ENCODE measurements at regions of chr11 and their contacts with region 1.

Region 1: DNA sequence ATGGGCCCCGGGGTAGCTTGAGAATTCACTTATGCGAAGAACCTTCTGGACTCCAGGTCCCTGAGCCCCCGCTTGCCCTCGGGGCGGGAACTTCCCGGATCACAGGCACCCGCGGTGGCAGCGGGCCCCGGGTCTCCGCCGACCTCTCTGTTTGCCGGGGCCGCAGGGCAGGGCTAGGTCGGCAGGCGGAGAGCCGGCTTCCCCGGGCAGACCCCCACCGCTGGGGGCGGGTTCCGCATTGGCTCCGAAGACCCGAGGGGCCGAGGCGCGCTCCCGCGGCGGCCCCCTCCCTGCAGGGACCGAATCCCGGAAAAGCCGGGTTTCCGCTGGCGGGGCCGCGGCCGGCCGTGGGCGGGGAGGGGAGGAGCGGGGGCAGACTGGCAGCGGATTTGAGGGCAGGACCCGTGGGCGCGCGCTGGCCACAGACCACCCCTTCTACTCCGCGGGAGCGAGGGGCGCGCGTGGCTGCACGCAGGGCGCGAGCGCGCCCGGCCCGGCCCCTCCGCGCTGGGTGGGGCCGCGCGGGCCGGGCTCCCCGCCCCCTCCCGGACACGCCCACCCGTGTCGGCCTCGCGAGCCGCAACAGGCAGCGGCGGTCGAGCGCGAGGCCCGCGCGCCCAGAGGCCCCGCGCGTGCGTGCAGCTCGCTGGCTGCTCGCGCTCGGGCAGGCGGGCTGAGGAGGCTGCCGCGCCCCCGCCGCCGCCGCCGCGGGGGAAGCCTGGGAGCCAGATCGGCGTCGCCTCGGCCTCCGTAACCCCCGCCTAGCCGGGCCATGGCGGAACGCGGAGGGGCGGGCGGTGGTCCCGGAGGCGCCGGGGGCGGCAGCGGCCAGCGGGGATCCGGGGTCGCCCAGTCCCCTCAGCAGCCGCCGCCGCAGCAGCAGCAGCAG is at the start of gene PACS1:
- DNase-seq: peak; percentile 78
- H3K4me3 Mint-ChIP-seq: peak within 1 kb of the TSS; percentile 95
- H3K27ac Mint-ChIP-seq: peak within 1 kb of the TSS; percentile 91
- H3K4me1 Mint-ChIP-seq: peaks cover 70% of the 10 kb centered on the region
- H3K27me3 Mint-ChIP-seq: no peaks in the 10 kb centered on the region
- total RNA-seq, gene PACS1: 80.4 and 89.5 TPM in 2 replicates

Region 2: DNA sequence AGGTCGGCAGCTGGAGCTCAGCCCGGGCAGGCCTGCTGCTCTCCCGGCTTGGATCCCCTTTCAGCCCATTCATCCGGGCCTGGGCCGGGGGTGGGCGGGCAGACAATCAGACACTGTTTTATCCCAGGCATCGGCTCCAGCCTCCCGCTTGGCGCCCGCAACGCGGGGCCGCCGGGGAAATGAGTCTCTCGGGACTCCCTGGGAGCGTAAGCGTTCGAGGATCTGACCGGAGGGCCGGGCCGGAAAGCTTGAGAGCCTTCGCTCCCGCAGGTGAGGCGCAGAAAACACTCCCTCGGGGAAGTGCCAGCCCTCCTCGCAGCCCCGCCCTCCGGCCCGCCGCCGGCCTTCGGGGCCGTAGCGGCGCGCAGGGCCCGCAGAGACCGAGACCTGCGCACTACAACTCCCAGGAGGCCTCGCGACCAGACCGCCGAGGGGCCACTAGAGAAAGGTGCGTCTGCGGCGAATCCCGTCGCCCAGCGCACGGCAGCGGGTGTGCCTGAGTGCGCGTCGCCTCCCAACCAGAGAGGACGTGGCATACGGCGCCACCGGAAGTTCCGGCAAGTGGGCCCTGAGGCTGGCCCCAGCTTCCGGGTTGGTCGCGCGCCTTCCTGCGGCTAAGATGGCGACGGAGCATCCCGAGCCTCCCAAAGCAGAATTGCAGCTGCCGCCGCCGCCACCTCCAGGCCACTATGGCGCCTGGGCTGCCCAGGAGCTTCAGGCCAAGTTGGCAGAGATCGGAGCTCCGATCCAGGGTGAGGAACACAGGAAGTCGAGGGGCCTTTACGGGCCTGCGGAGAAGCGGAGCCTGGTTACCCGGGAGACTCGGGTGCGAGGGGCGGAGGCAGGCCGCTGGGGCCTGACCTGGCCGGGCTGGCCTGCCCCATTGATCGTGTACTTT is 17.9 kb before region 1 on chr11 and contains the start of gene SF3B2:
- intact Hi-C with region 1: loop called (anchors 1 kb)
- DNase-seq: peak; percentile 97
- H3K4me3 Mint-ChIP-seq: peak within 1 kb of the TSS; percentile 100
- H3K27ac Mint-ChIP-seq: peak within 1 kb of the TSS; percentile 97
- H3K4me1 Mint-ChIP-seq: peaks cover 33% of the 10 kb centered on the region
- H3K27me3 Mint-ChIP-seq: peaks cover 4% of the 10 kb centered on the region
- total RNA-seq, gene SF3B2: 267 TPM in 2 replicates

Region 3: GRCh38 chr11:66081505-66081904 is 11.5 kb after region 1 on chr11:
- intact Hi-C with region 1: loop called (anchors 1 kb)
- DNase-seq: peak; percentile 70
- H3K4me3 Mint-ChIP-seq: peak overlapping the region; percentile 89
- H3K27ac Mint-ChIP-seq: peak overlapping the region; percentile 93
- H3K4me1 Mint-ChIP-seq: peaks cover 64% of the 10 kb centered on the region
- H3K27me3 Mint-ChIP-seq: no peaks in the 10 kb centered on the region

Region 4: DNA sequence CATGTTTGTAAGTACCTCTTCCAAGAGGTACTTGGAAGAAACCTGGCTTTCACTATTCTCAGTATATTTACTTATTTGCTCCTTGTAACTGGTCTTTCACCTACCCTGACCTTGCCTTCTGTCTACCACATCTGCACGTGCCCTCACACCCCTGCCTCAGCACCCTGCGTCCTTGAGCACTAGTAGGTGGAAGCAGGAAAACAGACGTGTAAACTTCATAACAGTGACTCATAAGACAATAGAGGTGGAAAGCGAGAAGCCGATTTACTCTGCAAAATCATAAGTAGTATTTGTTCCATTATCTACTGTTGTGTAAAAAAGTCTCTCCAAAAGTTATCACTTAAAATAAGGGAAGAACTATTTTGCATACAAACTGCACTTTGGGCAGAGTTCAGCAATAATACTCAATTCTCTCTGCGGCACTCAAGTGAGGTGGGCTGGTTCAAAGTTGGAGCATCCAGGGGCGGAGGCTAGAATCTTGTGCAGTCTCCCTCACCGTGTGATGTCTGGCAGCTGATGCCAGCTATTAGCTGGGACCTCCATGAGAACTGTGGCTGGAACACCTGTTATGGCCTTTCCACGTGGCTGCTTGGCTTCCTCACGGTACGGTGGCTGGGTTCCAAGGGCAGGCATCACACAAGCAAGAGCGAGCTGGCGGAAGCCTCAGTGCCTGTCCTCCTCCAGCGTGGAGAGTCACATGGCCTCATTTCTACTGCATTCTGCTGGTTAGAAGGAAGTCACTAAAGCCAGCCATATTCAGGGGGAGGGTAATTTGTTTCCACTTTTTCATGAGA is 30.5 kb after region 1 on chr11:
- intact Hi-C with region 1: loop called (anchors 2 kb)
- DNase-seq: peak; percentile 63
- H3K4me3 Mint-ChIP-seq: peak overlapping the region; percentile 83
- H3K27ac Mint-ChIP-seq: peak overlapping the region; percentile 86
- H3K4me1 Mint-ChIP-seq: peaks cover 53% of the 10 kb centered on the region
- H3K27me3 Mint-ChIP-seq: no peaks in the 10 kb centered on the region

Region 5: DNA sequence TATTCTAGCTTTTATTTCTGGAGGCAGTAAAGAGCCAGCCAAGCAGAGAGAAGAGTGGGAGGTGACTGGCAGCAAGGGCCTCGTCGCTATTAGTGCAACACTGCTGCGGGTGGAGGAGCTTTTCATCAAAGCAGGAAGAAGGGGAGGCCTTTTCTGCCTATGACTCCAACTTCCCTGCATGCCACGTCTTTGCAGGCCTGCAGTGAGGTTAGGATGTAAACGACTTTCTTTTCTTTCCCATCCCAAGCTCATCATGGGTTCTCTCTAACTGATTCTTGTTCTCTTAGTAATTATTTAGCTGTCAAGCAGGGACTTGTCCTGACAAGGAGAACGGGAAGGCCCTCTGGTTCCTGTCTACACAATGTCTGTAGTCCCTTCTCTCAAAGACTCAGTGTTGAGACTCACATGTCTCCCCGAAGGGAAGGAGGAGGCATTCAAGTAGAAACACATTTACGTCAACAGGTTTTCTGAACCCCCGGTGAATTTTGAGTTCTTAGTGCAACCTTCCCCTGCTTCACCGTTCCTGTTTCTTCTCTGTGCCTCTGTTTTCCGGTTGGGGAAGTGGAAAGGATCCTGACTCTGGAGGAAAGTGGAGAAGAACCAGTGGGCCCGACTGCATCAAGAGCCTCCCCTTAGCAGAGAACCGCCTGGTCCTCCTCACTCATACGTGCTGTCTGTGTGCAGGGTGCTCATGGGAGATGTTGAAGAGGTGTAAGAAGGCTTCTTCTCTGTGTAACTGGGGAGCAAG is 57.0 kb after region 1 on chr11:
- intact Hi-C with region 1: loop called (anchors 2 kb)
- DNase-seq: peak; percentile 38
- H3K4me3 Mint-ChIP-seq: peak overlapping the region; percentile 67
- H3K27ac Mint-ChIP-seq: peak overlapping the region; percentile 97
- H3K4me1 Mint-ChIP-seq: peaks cover 59% of the 10 kb centered on the region
- H3K27me3 Mint-ChIP-seq: no peaks in the 10 kb centered on the region

Region 6: GRCh38 chr11:66136752-66137123 is 66.8 kb after region 1 on chr11:
- intact Hi-C with region 1: loop called (anchors 1 kb)
- DNase-seq: no peak
- H3K4me3 Mint-ChIP-seq: no peak overlapping the region
- H3K27ac Mint-ChIP-seq: peak overlapping the region; percentile 52
- H3K4me1 Mint-ChIP-seq: peaks cover 28% of the 10 kb centered on the region
- H3K27me3 Mint-ChIP-seq: no peaks in the 10 kb centered on the region

Region 7: DNA sequence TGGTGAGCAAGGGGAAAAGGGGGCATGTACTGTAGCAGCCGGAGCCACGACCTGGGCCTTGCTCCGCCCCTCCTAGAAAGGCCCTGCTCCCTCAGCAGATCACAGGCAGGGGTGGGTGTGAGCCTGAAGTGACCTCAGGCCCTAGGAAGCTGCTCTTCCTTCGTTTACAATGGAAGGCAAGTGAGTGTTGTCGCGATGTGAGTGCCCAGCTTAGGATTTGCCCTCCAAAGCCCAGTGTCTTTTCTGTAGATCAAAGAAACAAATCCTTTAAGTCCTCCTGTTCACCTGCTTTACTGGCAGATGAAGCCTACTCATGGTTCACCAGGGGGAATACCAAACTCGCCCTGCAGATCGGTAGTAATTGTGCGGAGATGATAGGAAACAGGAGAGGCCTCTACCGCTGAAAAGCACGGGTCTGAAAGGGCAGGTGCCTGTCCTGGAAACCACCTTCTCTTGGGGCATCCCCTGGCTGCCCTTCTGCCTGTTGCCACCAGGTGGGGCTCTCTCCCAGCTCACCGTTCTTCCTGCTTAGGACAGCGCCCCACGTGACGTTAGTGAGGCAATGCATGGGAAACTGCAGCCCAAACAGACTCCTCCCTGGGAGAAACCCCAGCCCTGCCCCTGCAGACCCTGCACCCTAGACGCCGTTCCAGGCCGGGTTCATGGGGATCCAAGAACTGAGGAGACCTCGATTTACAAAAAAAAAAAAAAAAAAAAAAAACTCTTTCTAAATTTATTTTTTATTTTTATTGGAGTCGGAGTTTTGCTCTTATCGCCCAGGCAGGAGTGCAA is 152.6 kb after region 1 on chr11:
- intact Hi-C with region 1: loop called (anchors 1 kb)
- DNase-seq: peak; percentile 92
- H3K4me3 Mint-ChIP-seq: peak overlapping the region; percentile 20
- H3K27ac Mint-ChIP-seq: peak overlapping the region; percentile 97
- H3K4me1 Mint-ChIP-seq: peaks cover 20% of the 10 kb centered on the region
- H3K27me3 Mint-ChIP-seq: no peaks in the 10 kb centered on the region